Activated CD4-positive, alpha-beta T cell treated with anti-CD3 and anti-CD28 coated beads, Interleukin-2, amount 10 ng/mL, durations not matched to agents 24 days and 14 days (primary cell): ENCODE measurements at regions of chr9 and their contacts with region 1.

Region 1: DNA sequence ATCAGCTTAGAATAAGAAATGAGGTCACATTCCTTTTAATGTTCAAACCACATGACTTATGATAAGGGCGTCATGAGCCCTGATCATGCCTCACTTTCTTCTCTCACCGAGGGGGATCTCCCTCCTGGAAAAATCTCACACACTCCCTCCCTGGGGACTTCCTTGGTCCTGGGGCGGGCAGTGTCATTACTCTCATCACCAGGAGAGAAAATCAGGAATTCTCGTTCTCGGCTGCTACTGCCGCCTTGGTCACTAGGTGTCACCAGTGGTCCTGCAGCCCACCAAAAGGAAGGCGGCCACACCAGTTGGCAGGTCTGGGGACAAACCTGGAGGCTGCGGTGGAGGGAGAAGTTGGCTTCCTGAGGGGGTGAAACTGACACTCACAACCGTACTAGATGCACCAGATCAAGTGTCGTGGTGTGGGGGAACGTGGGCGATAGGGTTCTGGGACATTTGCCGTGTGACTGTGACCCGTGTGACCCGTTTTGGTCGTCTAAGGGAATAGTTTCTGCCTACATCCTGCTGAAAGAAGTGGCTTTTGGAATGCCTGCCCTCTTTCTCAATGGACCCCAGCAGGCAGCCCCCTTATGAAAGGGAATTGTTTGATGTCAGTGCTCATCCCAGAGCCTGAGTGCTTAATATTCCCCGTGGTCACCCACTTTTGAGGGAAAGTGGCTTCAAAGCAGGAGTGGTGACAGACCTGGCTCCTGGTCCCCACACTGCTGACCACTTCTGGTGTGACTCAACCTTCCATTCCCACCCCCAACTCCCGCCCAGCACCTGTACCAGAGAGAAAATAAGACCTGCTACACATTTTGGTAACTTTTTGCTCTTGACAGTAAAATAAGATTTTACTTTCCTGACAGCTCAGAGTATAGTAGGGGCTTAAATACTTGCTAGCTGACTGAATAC is 63.2 kb downstream of the ACER2 start:
- DNase-seq: peak; percentile 73
- H3K4me3 Mint-ChIP-seq: peak overlapping the region; percentile 63
- H3K27ac Mint-ChIP-seq: peak overlapping the region; percentile 51
- H3K4me1 Mint-ChIP-seq: peaks cover 12% of the 10 kb centered on the region
- H3K27me3 Mint-ChIP-seq: peaks cover 27% of the 10 kb centered on the region

Region 2: DNA sequence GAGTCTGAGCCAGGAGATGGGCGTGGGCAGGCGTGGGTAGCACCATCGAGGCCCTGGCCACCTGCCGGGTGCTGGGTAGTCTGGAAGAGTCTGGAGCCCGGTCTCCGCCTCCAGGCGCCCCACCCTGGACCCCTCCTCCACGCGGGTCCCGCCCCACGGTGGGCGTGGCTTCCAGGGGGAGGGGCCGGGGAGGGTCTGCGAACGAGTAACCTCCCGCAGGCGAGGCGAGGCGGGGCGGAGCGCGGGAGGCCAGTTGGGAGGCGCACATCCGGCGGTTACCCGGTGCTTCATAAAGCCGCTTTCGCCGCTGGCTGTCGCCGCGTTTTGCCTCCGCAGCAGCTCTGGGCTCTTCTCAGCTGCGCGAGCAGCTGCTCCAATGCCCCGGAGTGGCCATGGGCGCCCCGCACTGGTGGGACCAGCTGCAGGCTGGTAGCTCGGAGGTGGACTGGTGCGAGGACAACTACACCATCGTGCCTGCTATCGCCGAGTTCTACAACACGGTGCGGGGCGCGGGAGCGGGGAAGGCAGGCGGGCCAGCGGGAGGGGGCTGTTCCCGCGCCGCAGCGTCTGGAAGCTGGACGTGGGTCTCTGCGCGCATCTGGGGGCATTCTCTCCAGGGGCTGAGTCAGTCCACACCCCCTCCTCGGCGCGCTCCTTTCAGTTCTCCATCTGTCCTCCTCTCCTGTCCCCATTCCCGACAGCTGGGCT is 63.1 kb before region 1 on chr9 and contains the start of gene ACER2:
- intact Hi-C with region 1: no loop called
- DNase-seq: peak; percentile 99
- H3K4me3 Mint-ChIP-seq: peak within 1 kb of the TSS; percentile 93
- H3K27ac Mint-ChIP-seq: peak within 1 kb of the TSS; percentile 81
- H3K4me1 Mint-ChIP-seq: peaks cover 12% of the 10 kb centered on the region
- H3K27me3 Mint-ChIP-seq: peaks cover 4% of the 10 kb centered on the region
- total RNA-seq, gene ACER2: 0.96 and 1.3 TPM in 2 replicates

Region 3: DNA sequence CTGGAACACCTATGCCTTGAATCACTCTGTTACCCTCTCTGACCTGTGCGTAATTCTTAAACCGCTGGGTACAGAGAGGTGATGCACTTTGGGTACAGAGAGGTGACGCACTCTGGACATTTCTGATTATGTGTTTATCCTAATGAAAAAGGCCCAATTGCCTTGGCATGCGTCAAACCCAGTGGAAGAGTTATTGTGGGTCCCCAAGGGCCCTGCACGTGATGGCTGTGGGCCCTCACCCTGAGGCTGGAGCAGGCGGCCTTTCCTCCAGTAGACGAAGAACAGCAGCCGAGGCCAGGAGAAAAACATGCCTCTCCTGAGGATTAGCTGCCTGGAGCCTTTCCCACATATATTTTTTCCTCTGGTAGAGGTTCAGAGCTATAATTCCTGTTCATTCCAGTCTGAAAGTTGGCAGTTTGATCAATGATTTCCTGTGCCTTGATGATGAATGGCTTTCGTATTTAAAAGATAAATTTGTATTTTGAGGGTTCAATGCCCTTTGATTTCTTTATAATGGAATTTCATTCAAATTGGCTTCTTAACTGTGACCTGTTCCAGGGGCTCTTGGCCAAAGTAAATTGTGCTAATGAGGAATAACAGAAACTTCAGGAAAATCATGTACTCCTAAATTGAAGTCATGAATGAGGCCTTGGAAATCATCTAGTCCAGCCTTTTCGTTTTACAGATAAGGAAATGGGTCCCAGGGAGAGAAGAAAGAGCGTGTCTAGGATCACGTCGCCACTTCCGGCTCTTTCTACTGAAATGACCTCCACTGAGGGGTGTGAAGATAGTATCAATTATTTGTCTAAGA is 40.4 kb before region 1 on chr9:
- intact Hi-C with region 1: no loop called
- DNase-seq: no peak
- H3K4me3 Mint-ChIP-seq: no peak overlapping the region
- H3K27ac Mint-ChIP-seq: no peak overlapping the region
- H3K4me1 Mint-ChIP-seq: no peaks in the 10 kb centered on the region
- H3K27me3 Mint-ChIP-seq: no peaks in the 10 kb centered on the region

Region 4: DNA sequence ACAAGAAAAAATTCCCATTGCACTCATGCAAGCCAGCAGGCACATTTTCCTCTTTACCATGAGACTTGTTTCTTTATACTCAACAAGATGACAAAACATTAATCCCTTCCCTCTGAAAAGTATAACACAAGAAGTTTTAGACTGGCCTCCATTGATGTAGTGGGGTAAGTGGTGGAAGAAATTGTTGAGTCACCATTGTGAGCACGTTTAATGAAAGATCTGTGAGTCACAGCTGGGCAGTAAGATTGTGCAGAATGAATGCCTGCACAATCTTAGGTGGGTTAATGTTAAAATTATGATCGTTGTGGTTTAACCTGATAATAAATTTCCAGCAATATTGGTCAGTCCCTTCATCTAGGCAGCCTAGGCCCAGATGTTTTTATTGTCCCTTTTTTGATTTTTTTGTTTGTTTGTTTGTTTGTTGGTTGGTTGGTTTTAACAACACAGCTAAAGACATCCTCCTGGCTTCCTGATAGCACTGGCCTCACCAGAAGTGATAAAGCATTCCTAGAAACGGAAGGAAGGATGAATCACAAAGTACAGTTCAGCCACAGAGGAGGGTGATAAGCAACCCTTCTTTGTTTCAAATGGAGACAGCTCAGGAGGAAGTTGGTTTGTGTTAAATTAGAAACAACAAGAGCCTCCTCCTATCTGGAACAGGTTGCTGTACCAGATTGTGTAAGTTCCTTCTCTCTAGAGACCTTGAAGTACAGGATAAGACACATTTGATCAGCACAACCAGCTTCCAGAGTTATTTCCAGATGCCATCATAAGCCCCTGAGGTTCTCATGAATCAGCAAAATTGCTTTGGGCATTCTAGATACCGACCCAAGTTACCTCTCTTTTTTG is 276.5 kb after region 1 on chr9:
- intact Hi-C with region 1: loop called (anchors 10 kb)
- DNase-seq: peak; percentile 74
- H3K4me3 Mint-ChIP-seq: peak overlapping the region; percentile 20
- H3K27ac Mint-ChIP-seq: peak overlapping the region; percentile 61
- H3K4me1 Mint-ChIP-seq: peaks cover 18% of the 10 kb centered on the region
- H3K27me3 Mint-ChIP-seq: peaks cover 11% of the 10 kb centered on the region

Region 5: GRCh38 chr9:20693068-20693467 is 1221.1 kb after region 1 on chr9:
- intact Hi-C with region 1: no loop called
- DNase-seq: no peak
- H3K4me3 Mint-ChIP-seq: no peak overlapping the region
- H3K27ac Mint-ChIP-seq: no peak overlapping the region
- H3K4me1 Mint-ChIP-seq: peaks cover 3% of the 10 kb centered on the region
- H3K27me3 Mint-ChIP-seq: no peaks in the 10 kb centered on the region

Region 6: DNA sequence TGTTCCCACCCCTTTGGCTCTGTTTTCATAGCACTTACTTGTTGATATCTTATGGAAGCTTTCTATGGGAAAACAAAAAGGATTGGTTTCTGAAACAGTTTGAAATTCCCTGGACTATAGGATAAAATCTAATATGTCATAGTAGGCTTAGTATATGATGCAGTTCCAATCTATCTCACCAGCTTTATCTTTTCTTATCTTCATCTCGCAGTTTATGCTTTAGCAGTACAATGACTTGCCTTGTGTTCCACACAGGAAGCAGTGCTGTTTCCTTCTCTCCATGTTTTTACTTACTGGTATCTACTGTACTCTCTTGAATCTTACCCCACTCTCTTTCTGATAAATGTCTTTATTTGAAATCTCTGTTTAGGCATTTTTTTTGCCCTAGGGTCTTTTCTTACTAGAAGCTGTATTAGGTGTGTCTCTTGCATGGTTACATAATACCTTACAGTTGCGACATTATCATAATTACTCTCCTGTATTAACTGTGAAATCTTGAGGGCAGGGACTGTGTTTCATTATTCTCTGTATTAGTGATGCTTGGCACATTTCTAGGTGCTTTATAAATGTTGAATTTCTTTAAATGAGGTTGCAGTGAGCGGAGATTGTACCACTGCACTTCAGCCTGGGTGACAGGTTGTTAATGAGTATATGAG is 1288.4 kb after region 1 on chr9:
- intact Hi-C with region 1: no loop called
- DNase-seq: no peak
- H3K4me3 Mint-ChIP-seq: no peak overlapping the region
- H3K27ac Mint-ChIP-seq: no peak overlapping the region
- H3K4me1 Mint-ChIP-seq: peaks cover 2% of the 10 kb centered on the region
- H3K27me3 Mint-ChIP-seq: no peaks in the 10 kb centered on the region

Region 7: DNA sequence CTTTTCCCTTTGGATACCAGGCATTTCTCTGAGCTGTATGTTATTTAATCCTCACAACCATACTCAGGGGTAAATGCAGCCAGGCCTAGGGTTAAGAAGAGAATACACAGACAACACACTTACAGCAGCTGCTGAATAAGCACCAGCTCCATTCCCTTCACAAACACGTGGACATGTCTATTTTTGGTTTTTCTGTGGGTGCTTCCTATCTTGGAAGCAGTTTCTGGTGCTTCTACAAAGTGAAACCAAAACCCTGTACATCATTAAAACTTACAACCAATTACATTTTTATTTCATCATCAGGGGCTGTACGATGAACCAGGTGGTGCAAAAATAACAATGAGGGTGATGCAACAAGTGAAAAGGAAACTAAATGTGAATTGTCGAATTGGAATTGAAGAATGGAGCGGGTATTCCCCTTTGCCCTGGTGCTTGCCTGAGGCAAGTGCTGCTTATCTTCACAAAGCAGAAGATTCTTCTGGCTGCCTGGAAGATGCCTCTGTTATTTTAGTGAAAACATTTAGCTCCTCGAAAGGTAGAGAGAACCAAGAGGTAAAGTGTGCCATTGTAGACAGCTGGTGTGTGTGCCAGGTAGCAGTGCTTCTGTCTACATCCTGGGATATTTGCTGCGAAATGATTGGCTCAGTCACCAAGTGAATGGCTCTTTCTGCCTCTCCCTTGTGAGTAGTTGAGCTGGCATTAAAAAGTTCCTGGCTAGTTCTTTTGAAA is 1624.3 kb after region 1 on chr9:
- intact Hi-C with region 1: loop called (anchors 10 kb)
- DNase-seq: peak; percentile 85
- H3K4me3 Mint-ChIP-seq: peak overlapping the region; percentile 68
- H3K27ac Mint-ChIP-seq: peak overlapping the region; percentile 76
- H3K4me1 Mint-ChIP-seq: peaks cover 32% of the 10 kb centered on the region
- H3K27me3 Mint-ChIP-seq: no peaks in the 10 kb centered on the region